Left cardiac atrium (tissue), 4 donors: ENCODE measurements at regions of chr2 and their contacts with region 1.

Region 1: GRCh38 chr2:163345908-163346573 is 389.8 kb downstream of the FIGN start:
- DNase-seq: no peak
- ATAC-seq: no peak

Region 2: DNA sequence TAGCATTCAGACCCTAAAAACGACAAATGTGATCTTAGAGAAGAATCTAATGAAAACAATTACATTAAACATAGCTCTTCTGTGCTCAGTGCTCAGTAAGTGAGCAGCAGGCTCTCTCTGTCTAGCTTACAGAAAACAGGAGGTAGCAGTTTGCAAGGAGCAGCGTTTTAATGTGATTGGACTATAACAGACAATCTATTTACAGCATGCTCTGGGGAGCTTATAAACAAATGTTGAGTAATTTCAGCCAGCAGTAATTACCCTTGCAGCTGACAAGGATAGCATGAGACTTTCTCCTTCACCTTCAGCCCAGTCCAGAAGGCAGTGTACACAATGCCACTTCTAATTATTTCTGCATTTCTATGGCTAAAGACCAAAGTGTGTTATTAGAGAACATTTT is 119.4 kb after region 1 on chr2:
- intact Hi-C with region 1: loop called in 1 of 2 experiments (anchors 5 kb)
- DNase-seq: no peak
- ATAC-seq: peak in 1 of 2 donors; percentile 47

Region 3: GRCh38 chr2:163735685-163736432 is 389.8 kb after region 1 on chr2 and contains the start of gene FIGN:
- intact Hi-C with region 1: loop called in 1 of 2 experiments (anchors 2 kb)
- DNase-seq: peak; percentile 80
- ATAC-seq: peak; percentile 88 to 89
- total RNA-seq, gene FIGN: 7.3 to 13.2 TPM

Region 4: GRCh38 chr2:164055623-164056022 is 709.6 kb after region 1 on chr2:
- intact Hi-C with region 1: loop called in 1 of 2 experiments (anchors 5 kb)
- DNase-seq: no peak
- ATAC-seq: no peak

Region 5: GRCh38 chr2:164420786-164421185 is 1074.7 kb after region 1 on chr2:
- intact Hi-C with region 1: loop called in 1 of 2 experiments (anchors 10 kb)
- DNase-seq: no peak
- ATAC-seq: no peak